Activated CD4-positive, alpha-beta T cell treated with anti-CD3 and anti-CD28 coated beads, Interleukin-2, amount 10 ng/mL, durations not matched to agents 7 days and 5 days (primary cell): ENCODE measurements at regions of chr2 and their contacts with region 1.

Region 1: GRCh38 chr2:241149925-241150659 is at the start of gene PPP1R7:
- DNase-seq: peak; percentile 97
- H3K4me3 Mint-ChIP-seq: peak within 1 kb of the TSS; percentile 89
- H3K27ac Mint-ChIP-seq: peak within 1 kb of the TSS; percentile 94
- H3K4me1 Mint-ChIP-seq: peaks cover 51% of the 10 kb centered on the region
- H3K27me3 Mint-ChIP-seq: no peaks in the 10 kb centered on the region
- total RNA-seq, gene PPP1R7: 89.5 to 110 TPM

Region 2: DNA sequence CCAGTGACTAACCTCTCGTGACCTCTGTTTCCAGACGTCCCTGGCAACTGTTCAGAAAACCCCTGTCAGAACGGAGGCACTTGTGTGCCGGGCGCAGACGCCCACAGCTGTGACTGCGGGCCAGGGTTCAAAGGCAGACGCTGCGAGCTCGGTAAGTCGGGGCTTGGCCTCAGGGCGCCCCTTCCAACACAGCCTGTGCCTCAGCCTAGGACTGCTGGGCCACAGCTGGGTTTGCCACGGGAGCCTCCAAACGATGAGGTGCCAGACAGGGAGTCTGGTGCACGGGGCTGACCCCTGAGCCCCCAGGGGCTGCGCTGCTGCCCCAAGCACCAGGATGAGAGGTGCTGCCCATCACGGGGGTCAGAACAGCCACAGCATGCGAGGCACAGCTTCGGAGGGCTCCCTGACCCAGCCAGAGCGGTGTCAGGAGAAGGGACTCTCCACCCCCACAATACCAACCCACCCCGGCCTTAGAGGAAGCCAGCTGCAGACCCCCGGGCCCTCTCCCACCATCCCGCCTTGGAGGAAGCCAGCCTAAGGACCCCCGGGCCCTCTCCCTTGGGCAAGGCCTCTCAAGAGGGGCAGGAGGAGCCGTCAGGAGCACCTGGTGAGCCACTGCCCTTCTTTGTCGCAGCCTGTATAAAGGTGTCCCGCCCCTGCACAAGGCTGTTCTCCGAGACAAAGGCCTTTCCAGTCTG is 68.3 kb before region 1 on chr2:
- CTCF ChIA-PET with region 1: interaction called, 10 read pairs
- POLR2A ChIA-PET with region 1: no interaction called
- DNase-seq: no peak
- H3K4me3 Mint-ChIP-seq: no peak overlapping the region
- H3K27ac Mint-ChIP-seq: no peak overlapping the region
- H3K4me1 Mint-ChIP-seq: peaks cover 2% of the 10 kb centered on the region
- H3K27me3 Mint-ChIP-seq: no peaks in the 10 kb centered on the region